T-cell (primary cell): ENCODE measurements at regions of chr7 and their contacts with region 1.

Region 1: GRCh38 chr7:100488333-100489095 is 4.8 kb downstream of the NYAP1 start:
- DNase-seq: no peak
- ATAC-seq: no peak
- H3K4me3 ChIP-seq: no peak overlapping the region
- H3K4me3 Mint-ChIP-seq: no peak overlapping the region
- H3K27ac ChIP-seq: no peak overlapping the region
- H3K27ac Mint-ChIP-seq: no peak overlapping the region
- H3K4me1 ChIP-seq: peaks cover 0 to 22% of the 10 kb centered on the region in 2 experiments
- H3K4me1 Mint-ChIP-seq: peaks cover 14 to 29% (median 21%) of the 10 kb centered on the region in 3 donors
- H3K27me3 ChIP-seq: peaks cover 0 to 7% of the 10 kb centered on the region in 2 experiments
- H3K27me3 Mint-ChIP-seq: no peaks in the 10 kb centered on the region

Region 2: DNA sequence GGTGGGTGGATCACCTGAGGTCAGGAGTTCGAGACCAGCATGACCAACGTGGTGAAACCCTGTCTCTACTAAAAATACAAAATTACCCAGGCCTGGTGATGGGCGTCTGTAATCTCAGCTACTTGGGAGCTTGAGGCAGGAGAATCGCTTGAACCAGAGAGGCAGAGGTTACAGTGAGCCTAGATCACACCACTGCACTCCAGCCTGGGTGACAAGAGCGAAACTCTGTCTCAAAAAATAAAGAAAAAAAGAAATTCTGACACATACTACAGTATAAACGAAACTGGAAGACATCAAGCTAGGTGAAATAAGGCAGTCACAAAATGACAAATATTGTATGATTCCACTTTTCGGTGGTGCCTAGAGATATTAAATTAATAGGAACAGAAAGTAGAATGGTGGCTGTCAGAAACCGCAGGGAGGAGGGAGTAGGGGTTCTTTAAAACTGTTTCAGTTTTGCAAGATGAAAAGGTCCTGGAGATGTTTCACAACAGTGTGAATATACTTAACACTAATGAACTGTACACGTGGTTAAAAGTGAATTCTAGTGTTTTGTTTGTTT is 92.0 kb before region 1 on chr7:
- CTCF ChIA-PET with region 1: no interaction called
- POLR2A ChIA-PET with region 1: no interaction called
- DNase-seq: peak in 16 of 35 experiments; percentile 12 to 64 (median 24)
- ATAC-seq: peak; percentile 76 to 95 (median 92)
- H3K4me3 ChIP-seq: peak overlapping the region in 1 of 2 donors; percentile 11
- H3K4me3 Mint-ChIP-seq: peak overlapping the region; percentile 57 to 71 (median 70)
- H3K27ac ChIP-seq: peak overlapping the region; percentile 47
- H3K27ac Mint-ChIP-seq: peak overlapping the region; percentile 86 to 93
- H3K4me1 ChIP-seq: peaks cover 0 to 19% of the 10 kb centered on the region in 2 experiments
- H3K4me1 Mint-ChIP-seq: peaks cover 12 to 29% (median 25%) of the 10 kb centered on the region in 3 donors
- H3K27me3 ChIP-seq: no peaks in the 10 kb centered on the region
- H3K27me3 Mint-ChIP-seq: no peaks in the 10 kb centered on the region

Region 3: DNA sequence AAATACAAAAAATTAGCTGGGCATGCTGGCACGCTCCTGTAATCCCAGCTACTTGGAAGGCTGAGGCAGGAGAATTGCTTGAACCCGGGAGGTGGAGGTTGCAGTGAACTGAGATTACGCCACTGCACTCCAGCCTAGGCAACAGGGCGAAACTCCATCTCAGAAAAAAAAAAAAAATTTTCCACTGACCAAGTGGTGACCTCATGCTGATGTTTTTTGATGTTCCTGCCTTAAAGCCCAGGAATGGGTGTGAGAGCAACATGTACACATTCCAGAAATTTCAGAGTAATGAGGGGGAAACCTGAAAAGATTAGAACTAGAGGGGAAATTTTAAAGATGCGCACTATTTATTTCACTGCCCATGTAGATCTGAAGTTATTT is 14.8 kb after region 1 on chr7:
- CTCF ChIA-PET with region 1: no interaction called
- POLR2A ChIA-PET with region 1: interaction called in 1 of 2 experiments, 12 read pairs
- DNase-seq: no peak
- ATAC-seq: no peak
- H3K4me3 ChIP-seq: no peak overlapping the region
- H3K4me3 Mint-ChIP-seq: no peak overlapping the region
- H3K27ac ChIP-seq: no peak overlapping the region
- H3K27ac Mint-ChIP-seq: no peak overlapping the region
- H3K4me1 ChIP-seq: no peaks in the 10 kb centered on the region
- H3K4me1 Mint-ChIP-seq: peaks cover 0 to 3% (median 0%) of the 10 kb centered on the region in 3 donors
- H3K27me3 ChIP-seq: no peaks in the 10 kb centered on the region
- H3K27me3 Mint-ChIP-seq: no peaks in the 10 kb centered on the region